AG04449 (cell line): ENCODE measurements at regions of chr11 and their contacts with region 1.

Region 1: GRCh38 chr11:66408488-66409214 is 12.2 kb upstream of the NPAS4 start:
- DNase-seq: peak; percentile 61
- H3K4me3 ChIP-seq: peak overlapping the region; percentile 59
- CTCF ChIP-seq: peak; percentile 100

Region 2: DNA sequence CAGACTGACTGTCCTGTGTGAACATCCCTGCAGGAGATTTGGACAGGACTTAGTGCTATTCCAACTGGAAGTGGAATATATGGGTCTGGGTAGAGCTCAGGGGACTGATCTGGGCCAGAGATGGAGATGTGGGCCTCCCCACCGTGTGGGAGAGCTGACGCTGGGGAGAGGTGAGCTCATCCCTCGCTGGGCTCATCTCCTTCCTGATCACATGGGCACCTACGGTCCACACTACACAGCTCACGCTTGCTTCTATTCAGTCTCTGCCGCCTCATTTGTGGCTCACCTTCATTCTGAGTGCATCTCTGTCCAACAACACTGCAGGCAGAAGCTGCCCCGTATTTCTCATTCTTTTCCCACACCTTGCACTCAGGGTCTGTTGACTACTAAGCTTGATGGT is 156.8 kb before region 1 on chr11:
- CTCF ChIA-PET with region 1: no interaction called
- POLR2A ChIA-PET with region 1: no interaction called
- DNase-seq: no peak
- H3K4me3 ChIP-seq: no peak overlapping the region
- CTCF ChIP-seq: no peak

Region 3: GRCh38 chr11:66393954-66394353 is 14.7 kb before region 1 on chr11:
- CTCF ChIA-PET with region 1: interaction called, 1,169 read pairs
- POLR2A ChIA-PET with region 1: no interaction called
- DNase-seq: no peak
- H3K4me3 ChIP-seq: no peak overlapping the region
- CTCF ChIP-seq: no peak

Region 4: GRCh38 chr11:66421492-66422205 is 13.0 kb after region 1 on chr11:
- CTCF ChIA-PET with region 1: interaction called, 1,169 read pairs
- POLR2A ChIA-PET with region 1: interaction called, 8 read pairs
- DNase-seq: no peak
- H3K4me3 ChIP-seq: no peak overlapping the region
- CTCF ChIP-seq: no peak

Region 5: GRCh38 chr11:66438504-66439466 is 30.1 kb after region 1 on chr11 and contains the start of gene MRPL11:
- CTCF ChIA-PET with region 1: interaction called, 1,169 read pairs
- POLR2A ChIA-PET with region 1: no interaction called
- DNase-seq: peak; percentile 67
- H3K4me3 ChIP-seq: peak within 1 kb of the TSS; percentile 85
- CTCF ChIP-seq: peak; percentile 79

Region 6: DNA sequence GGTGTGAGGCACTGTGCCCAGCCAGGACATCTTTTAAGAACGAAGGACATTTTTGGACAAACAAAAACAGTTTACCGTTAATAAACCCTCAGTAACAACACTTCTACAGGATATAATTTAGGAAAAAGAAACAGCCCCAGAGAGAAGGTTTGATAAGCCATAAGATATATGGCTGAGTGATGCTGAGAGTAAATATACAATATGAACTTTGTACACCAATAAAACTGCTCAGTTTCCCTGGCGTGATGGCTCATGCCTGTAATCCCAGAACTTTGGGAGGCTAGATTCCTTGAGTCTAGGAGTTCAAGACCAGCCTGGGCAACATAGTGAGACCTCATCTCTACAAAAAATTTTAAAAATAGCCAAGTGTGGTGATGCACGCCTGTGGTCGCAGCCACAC is 89.9 kb after region 1 on chr11:
- CTCF ChIA-PET with region 1: no interaction called
- POLR2A ChIA-PET with region 1: no interaction called
- DNase-seq: no peak
- H3K4me3 ChIP-seq: no peak overlapping the region
- CTCF ChIP-seq: no peak